CD8-positive, alpha-beta T cell (primary cell): ENCODE measurements at regions of chr2 and their contacts with region 1.

Region 1: DNA sequence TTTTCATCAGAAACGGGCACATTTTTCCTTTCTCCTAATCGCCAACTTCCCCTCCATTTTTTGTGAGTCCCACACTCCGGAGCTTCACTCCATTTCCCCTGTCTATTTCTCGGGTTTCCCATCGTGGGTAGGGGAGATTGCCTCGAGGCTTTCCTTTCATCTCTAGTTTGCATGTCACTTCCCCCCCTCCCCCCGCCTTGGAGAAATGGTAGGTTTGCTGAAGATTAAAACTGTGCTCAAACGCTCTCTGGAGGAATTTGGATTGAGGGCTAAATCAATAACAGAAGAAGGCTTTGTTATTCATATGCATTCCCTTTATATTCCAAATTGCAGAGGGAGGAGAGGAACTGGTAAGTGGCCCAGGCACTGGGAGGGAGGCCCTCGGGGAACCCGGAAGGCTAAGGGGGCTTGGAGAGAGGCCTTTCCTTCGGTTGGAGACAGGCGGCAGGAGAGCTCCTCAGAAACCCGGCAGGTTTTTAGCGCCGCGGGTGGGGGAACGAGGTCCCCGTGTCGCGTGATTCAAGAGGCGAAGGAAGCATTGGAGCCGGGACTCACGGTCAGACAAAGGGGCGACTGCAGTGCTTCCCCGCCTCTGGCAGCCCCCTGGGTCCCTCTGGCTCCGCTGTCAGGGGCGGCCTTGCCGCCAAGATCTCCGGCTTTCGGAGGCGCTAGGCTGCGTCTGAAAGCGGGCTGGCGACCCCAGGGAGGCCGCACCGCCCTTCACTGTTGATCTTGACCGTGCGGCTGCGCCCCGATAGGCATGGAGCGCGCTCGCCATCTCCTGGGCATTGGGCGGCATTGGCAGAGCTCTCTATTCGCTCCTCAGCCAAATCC is 2.4 kb upstream of the HOXD12 start:
- DNase-seq: peak in 8 of 9 experiments; percentile 25 to 76 (median 56)
- ATAC-seq: peak; percentile 76
- H3K4me3 ChIP-seq: peak overlapping the region; percentile 38 to 51
- H3K4me3 Mint-ChIP-seq: peak overlapping the region; percentile 71
- H3K27ac ChIP-seq: no peak overlapping the region
- H3K27ac Mint-ChIP-seq: no peak overlapping the region
- H3K4me1 ChIP-seq: peaks cover 27% of the 10 kb centered on the region
- H3K4me1 Mint-ChIP-seq: peaks cover 24% of the 10 kb centered on the region
- H3K27me3 ChIP-seq: peaks cover 75 to 85% of the 10 kb centered on the region in 2 experiments
- H3K27me3 Mint-ChIP-seq: peaks cover 81% of the 10 kb centered on the region
- CTCF ChIP-seq: peak; percentile 77

Region 2: GRCh38 chr2:175030380-175031271 is 1066.6 kb before region 1 on chr2:
- CTCF ChIA-PET with region 1: no interaction called
- POLR2A ChIA-PET with region 1: no interaction called
- intact Hi-C with region 1: loop called in 1 of 2 experiments (anchors 10 kb)
- DNase-seq: peak in 2 of 9 experiments; percentile 6 to 12
- ATAC-seq: no peak
- H3K4me3 ChIP-seq: no peak overlapping the region
- H3K4me3 Mint-ChIP-seq: no peak overlapping the region
- H3K27ac ChIP-seq: no peak overlapping the region
- H3K27ac Mint-ChIP-seq: no peak overlapping the region
- H3K4me1 ChIP-seq: no peaks in the 10 kb centered on the region
- H3K4me1 Mint-ChIP-seq: no peaks in the 10 kb centered on the region
- H3K27me3 ChIP-seq: no peaks in the 10 kb centered on the region
- H3K27me3 Mint-ChIP-seq: no peaks in the 10 kb centered on the region
- CTCF ChIP-seq: no peak

Region 3: GRCh38 chr2:175111200-175111657 is 986.0 kb before region 1 on chr2:
- CTCF ChIA-PET with region 1: no interaction called
- POLR2A ChIA-PET with region 1: no interaction called
- intact Hi-C with region 1: loop called in 1 of 2 experiments (anchors 5 kb)
- DNase-seq: peak in 2 of 9 experiments; percentile 53 to 67
- ATAC-seq: peak; percentile 72
- H3K4me3 ChIP-seq: no peak overlapping the region
- H3K4me3 Mint-ChIP-seq: no peak overlapping the region
- H3K27ac ChIP-seq: no peak overlapping the region
- H3K27ac Mint-ChIP-seq: peak overlapping the region; percentile 33
- H3K4me1 ChIP-seq: no peaks in the 10 kb centered on the region
- H3K4me1 Mint-ChIP-seq: no peaks in the 10 kb centered on the region
- H3K27me3 ChIP-seq: no peaks in the 10 kb centered on the region
- H3K27me3 Mint-ChIP-seq: no peaks in the 10 kb centered on the region
- CTCF ChIP-seq: peak; percentile 97

Region 4: DNA sequence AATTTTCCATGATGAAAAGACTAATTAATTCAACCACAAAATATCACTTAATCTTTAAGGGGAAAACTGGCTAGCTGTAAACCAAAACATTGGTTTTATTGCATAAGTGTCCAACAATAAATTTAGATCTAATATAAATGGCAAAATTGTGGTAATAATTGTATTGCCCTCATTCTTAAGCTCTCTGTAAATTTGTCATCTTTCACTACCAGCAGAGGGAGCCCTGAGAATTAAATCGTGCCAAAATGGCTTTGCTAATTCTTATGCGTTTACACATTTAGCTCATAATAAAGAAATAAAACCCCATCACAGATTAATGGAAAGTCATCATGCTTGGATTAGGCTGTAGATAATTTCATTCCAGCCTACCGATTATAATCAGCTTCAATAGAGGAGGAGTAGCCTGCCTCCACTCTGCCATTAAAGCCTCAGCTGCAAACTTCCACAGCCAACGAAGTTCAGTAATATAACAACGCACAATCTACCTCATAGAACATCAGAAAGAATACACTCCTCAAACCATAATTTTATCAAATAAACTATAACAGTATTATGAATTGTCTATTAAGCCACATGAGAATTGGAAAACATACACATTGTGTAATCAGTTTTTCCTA is 845.7 kb before region 1 on chr2:
- CTCF ChIA-PET with region 1: interaction called, 6 read pairs
- POLR2A ChIA-PET with region 1: no interaction called
- intact Hi-C with region 1: loop called in 1 of 2 experiments (anchors 1 kb)
- DNase-seq: peak in 3 of 9 experiments; percentile 5 to 43 (median 24)
- ATAC-seq: no peak
- H3K4me3 ChIP-seq: no peak overlapping the region
- H3K4me3 Mint-ChIP-seq: no peak overlapping the region
- H3K27ac ChIP-seq: no peak overlapping the region
- H3K27ac Mint-ChIP-seq: no peak overlapping the region
- H3K4me1 ChIP-seq: no peaks in the 10 kb centered on the region
- H3K4me1 Mint-ChIP-seq: peaks cover 4% of the 10 kb centered on the region
- H3K27me3 ChIP-seq: peaks cover 0 to 2% of the 10 kb centered on the region in 2 experiments
- H3K27me3 Mint-ChIP-seq: peaks cover 25% of the 10 kb centered on the region
- CTCF ChIP-seq: peak; percentile 49

Region 5: GRCh38 chr2:175366815-175367214 is 730.4 kb before region 1 on chr2:
- CTCF ChIA-PET with region 1: no interaction called
- POLR2A ChIA-PET with region 1: no interaction called
- intact Hi-C with region 1: loop called in 1 of 2 experiments (anchors 5 kb)
- DNase-seq: peak in 2 of 9 experiments; percentile 36 to 43
- ATAC-seq: no peak
- H3K4me3 ChIP-seq: no peak overlapping the region
- H3K4me3 Mint-ChIP-seq: no peak overlapping the region
- H3K27ac ChIP-seq: no peak overlapping the region
- H3K27ac Mint-ChIP-seq: no peak overlapping the region
- H3K4me1 ChIP-seq: no peaks in the 10 kb centered on the region
- H3K4me1 Mint-ChIP-seq: no peaks in the 10 kb centered on the region
- H3K27me3 ChIP-seq: peaks cover 2 to 9% of the 10 kb centered on the region in 2 experiments
- H3K27me3 Mint-ChIP-seq: peaks cover 18% of the 10 kb centered on the region
- CTCF ChIP-seq: peak; percentile 38

Region 6: GRCh38 chr2:175690113-175690837 is 406.9 kb before region 1 on chr2:
- CTCF ChIA-PET with region 1: interaction called, 87 read pairs
- POLR2A ChIA-PET with region 1: interaction called, 7 read pairs
- intact Hi-C with region 1: loop called in 1 of 2 experiments (anchors 1 kb)
- DNase-seq: peak in 3 of 9 experiments; percentile 14 to 63 (median 59)
- ATAC-seq: peak; percentile 38
- H3K4me3 ChIP-seq: no peak overlapping the region
- H3K4me3 Mint-ChIP-seq: no peak overlapping the region
- H3K27ac ChIP-seq: no peak overlapping the region
- H3K27ac Mint-ChIP-seq: no peak overlapping the region
- H3K4me1 ChIP-seq: no peaks in the 10 kb centered on the region
- H3K4me1 Mint-ChIP-seq: no peaks in the 10 kb centered on the region
- H3K27me3 ChIP-seq: peaks cover 0 to under 1% of the 10 kb centered on the region in 2 experiments
- H3K27me3 Mint-ChIP-seq: peaks cover 27% of the 10 kb centered on the region
- CTCF ChIP-seq: peak; percentile 56